Activated T-helper 1 cell treated with anti-CD3 and anti-CD28 coated beads, Interleukin-12 subunit alpha, Interleukin-12 subunit beta, Interleukin-2, Interleukin-4 antibody, amounts not matched to agents 30 ng/mL and 10 ng/mL and 1 ng/mL, durations not matched to agents 14 hours and 24 hours and 36 hours (primary cell): ENCODE measurements at regions of chr9 and their contacts with region 1.

Region 1: GRCh38 chr9:79571309-79572031 is at the start of gene TLE4:
- DNase-seq: peak; percentile 100
- H3K4me3 Mint-ChIP-seq: peak within 1 kb of the TSS; percentile 70
- H3K27ac Mint-ChIP-seq: no peak within 1 kb of the TSS
- H3K4me1 Mint-ChIP-seq: peaks cover 36% of the 10 kb centered on the region
- H3K27me3 Mint-ChIP-seq: peaks cover 16% of the 10 kb centered on the region
- total RNA-seq, gene TLE4: 25.1 and 25.4 TPM in 2 replicates

Region 2: GRCh38 chr9:78235756-78236538 is 1335.5 kb before region 1 on chr9 and contains the start of gene CEP78:
- intact Hi-C with region 1: loop called (anchors 10 kb)
- DNase-seq: peak; percentile 85
- H3K4me3 Mint-ChIP-seq: no peak within 1 kb of the TSS
- H3K27ac Mint-ChIP-seq: peak within 1 kb of the TSS; percentile 92
- H3K4me1 Mint-ChIP-seq: peaks cover 31% of the 10 kb centered on the region
- H3K27me3 Mint-ChIP-seq: no peaks in the 10 kb centered on the region
- total RNA-seq, gene CEP78: 35.2 and 41.1 TPM in 2 replicates

Region 3: GRCh38 chr9:79477955-79478771 is 93.3 kb before region 1 on chr9:
- intact Hi-C with region 1: loop called (anchors 5 kb)
- DNase-seq: no peak
- H3K4me3 Mint-ChIP-seq: no peak overlapping the region
- H3K27ac Mint-ChIP-seq: peak overlapping the region; percentile 16
- H3K4me1 Mint-ChIP-seq: peaks cover 6% of the 10 kb centered on the region
- H3K27me3 Mint-ChIP-seq: no peaks in the 10 kb centered on the region

Region 4: DNA sequence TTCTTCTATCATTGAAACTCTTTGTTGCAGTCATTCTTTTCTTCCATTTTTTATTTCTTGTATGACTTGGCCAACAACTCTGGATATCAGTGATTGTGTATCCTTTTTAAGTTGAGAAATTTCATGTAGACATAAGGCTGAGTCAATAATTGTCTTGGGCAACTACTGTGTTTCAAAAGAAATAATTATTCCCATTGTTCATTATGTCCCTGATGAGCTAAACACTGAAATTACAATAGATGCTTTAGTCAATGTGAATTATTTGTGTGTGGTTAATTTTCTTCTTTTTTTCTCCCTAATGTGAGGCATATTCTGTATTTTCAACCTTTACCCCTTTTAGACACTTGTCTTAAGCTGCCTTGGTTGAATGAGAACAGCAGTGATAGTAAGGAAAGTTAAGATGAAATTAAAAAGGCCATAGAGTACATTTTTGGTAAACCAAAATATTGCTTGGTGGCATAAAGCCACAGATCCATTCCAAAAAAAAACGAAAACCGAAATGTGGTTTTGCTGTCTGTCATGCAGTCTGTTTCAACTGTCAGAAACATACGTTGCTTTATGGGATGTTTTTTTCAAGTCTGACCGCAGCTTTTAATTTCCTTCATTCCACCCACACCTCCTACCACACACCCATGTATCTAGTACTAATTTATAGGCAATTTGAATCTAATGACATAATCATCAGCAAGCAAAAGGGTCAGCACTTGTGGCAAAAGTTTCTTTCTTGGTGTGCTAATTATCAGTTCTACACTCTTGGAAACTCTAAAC is 21.4 kb after region 1 on chr9:
- intact Hi-C with region 1: loop called (anchors 1 kb)
- DNase-seq: peak; percentile 14
- H3K4me3 Mint-ChIP-seq: no peak overlapping the region
- H3K27ac Mint-ChIP-seq: peak overlapping the region; percentile 19
- H3K4me1 Mint-ChIP-seq: peaks cover 49% of the 10 kb centered on the region
- H3K27me3 Mint-ChIP-seq: peaks cover 16% of the 10 kb centered on the region

Region 5: DNA sequence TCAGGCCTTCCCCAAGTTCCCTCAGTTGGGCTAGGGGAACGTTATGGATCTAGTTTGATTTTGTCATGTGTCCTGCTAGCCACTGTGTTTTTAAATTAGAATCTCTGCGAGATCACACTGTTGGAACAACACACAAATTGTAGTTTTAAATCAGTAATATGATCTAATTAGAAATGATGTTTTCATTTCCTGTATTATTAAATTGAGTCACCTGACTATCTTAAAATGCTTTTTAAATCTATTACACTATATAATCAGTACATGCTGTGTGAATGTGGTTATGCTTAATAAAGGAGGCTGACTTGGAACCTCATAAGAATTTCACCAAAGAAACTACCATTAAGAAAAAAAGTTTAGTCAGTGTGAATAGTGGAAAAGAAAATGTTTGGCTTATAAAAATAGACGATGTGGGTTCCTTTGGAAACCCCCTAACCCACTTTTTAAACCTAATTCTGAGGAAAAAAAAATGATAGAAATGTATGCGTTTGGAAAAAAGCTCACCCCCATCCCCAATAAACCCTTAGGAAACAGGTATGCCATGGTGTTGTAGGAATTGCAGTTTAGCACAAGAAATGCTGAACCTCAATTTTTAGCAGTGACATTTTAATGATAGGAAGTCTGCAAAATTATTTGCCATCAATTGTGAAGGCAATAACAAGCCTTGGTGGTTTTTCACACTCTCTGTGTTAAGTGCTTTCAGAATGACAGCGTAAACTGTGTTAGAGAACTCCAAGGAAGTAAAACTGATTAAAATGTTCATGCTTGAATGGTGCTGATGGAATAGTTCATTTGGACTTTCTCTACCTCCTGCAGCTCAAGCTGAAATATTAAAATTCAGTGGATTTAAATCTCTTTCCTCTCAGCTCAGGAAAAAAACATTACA is 59.3 kb after region 1 on chr9:
- intact Hi-C with region 1: loop called (anchors 1 kb)
- DNase-seq: no peak
- H3K4me3 Mint-ChIP-seq: peak overlapping the region; percentile 42
- H3K27ac Mint-ChIP-seq: peak overlapping the region; percentile 72
- H3K4me1 Mint-ChIP-seq: peaks cover 63% of the 10 kb centered on the region
- H3K27me3 Mint-ChIP-seq: no peaks in the 10 kb centered on the region

Region 6: DNA sequence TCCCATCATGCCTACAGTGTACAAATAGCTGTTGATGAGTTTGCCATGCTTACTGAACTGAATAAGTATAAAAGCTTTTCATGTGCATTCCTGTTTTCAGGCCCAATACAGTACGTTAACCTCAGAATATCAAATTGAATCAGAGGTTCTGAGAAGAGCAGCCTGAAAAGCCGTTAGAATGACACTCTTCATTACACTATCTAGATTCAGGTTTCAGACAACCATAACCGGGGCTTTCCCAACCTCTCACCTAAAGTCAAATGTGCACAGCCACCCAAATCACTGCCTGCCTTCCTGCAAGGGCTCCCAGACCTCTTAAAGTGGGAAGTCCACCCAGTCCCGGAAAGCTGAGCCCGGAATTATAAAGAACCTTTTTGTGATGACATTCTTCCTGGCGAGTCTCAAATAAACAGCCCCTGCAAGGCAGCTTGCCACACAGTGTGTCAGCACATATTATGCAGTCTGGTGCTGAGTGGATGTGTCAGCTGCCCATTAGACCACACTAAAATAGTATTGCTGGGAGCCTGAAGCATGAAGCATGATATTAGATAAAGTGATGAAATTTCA is 246.1 kb after region 1 on chr9:
- intact Hi-C with region 1: loop called (anchors 1 kb)
- DNase-seq: peak; percentile 16
- H3K4me3 Mint-ChIP-seq: no peak overlapping the region
- H3K27ac Mint-ChIP-seq: no peak overlapping the region
- H3K4me1 Mint-ChIP-seq: peaks cover 53% of the 10 kb centered on the region
- H3K27me3 Mint-ChIP-seq: peaks cover 3% of the 10 kb centered on the region